Psoas muscle (tissue), 8 donors: ENCODE measurements at regions of chr17 and their contacts with region 1.

Region 1: GRCh38 chr17:77437017-77437416 is 296.2 kb downstream of the SEC14L1 start:
- DNase-seq: peak in 1 of 2 donors; percentile 58
- ATAC-seq: no peak
- H3K4me3 ChIP-seq: no peak overlapping the region
- H3K27ac ChIP-seq: peak overlapping the region; percentile 16
- H3K4me1 ChIP-seq: peaks cover 71% of the 10 kb centered on the region
- H3K27me3 ChIP-seq: no peaks in the 10 kb centered on the region
- CTCF ChIP-seq: no peak

Region 2: DNA sequence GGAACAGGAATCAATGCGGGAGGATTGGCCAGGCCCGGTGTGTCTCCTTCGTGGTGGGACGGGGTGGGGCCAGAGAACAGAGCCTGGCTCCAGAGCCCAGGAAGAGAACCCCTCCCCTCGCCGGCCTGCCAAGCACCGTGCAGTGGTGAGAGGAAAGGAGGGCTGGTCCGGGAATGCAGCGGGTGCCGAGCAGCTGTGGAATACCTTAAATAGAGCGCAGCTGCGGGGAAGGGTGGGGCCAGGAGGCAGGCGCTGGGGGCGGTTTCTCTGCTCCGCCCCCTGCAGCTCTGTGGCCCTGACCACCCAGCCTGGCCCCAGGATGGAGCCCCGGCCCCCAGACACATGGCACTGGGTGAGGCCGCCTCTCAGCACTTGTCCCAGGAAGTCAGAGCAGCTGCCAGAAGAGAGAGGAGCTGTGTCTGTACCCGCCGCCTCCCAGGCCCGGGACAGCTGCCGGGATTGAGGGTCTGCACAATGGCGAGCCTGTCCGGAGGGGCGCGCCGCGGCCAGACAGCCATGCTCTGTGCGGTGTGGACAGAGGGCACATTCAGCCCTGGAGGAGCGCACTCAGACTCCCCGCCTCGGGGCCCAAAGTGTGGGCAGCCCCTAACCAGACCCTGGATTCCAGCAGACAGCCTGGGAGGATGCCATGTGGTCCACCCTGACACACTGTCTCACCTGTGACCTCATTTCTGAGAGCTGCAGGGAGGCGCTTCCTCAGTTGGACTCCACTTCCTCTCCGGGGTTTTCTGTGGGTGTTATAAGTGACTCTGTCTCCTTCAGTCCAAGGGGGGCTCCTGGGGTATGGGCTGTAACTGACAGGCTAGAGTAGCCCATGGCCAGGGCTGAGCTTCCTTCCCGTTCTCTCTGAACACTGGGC is 27.5 kb before region 1 on chr17:
- intact Hi-C with region 1: no loop called
- DNase-seq: peak; percentile 65 to 77
- ATAC-seq: peak; percentile 50 to 72 (median 60)
- H3K4me3 ChIP-seq: peak overlapping the region; percentile 27
- H3K27ac ChIP-seq: peak overlapping the region; percentile 65
- H3K4me1 ChIP-seq: peaks cover 47% of the 10 kb centered on the region
- H3K27me3 ChIP-seq: no peaks in the 10 kb centered on the region
- CTCF ChIP-seq: no peak

Region 3: DNA sequence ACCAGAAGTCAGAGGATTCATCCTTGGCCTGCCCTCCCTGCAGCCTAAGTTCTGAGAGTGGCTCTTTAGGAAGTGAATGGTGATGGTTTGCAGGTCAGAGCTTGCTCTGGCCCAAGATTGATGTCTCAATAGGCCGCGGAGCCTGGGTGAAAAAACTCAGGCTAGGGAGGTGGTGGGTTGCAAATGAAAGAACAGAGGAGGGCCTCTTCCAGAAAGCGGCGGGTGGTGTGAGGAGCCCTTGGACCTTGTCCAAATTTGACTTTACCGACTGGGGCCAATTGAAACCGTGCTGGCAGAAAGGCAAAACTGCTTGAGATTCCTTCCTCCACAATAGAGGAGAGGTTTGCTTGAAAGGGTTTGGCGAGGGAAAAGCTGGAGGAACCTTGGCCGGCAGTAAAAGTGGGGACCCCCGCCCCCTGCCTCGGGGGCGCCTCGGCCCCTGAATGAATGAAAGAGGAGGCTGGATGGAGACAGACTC is 35.0 kb after region 1 on chr17:
- intact Hi-C with region 1: loop called in 1 of 2 experiments (anchors 5 kb)
- DNase-seq: peak in 1 of 2 donors; percentile 51
- ATAC-seq: peak in 2 of 4 donors; percentile 6 to 17
- H3K4me3 ChIP-seq: no peak overlapping the region
- H3K27ac ChIP-seq: peak overlapping the region; percentile 46
- H3K4me1 ChIP-seq: peaks cover 53% of the 10 kb centered on the region
- H3K27me3 ChIP-seq: no peaks in the 10 kb centered on the region
- CTCF ChIP-seq: no peak

Region 4: GRCh38 chr17:77479372-77480198 is 42.6 kb after region 1 on chr17:
- intact Hi-C with region 1: loop called (anchors 5 kb)
- DNase-seq: no peak
- ATAC-seq: no peak
- H3K4me3 ChIP-seq: no peak overlapping the region
- H3K27ac ChIP-seq: no peak overlapping the region
- H3K4me1 ChIP-seq: peaks cover 31% of the 10 kb centered on the region
- H3K27me3 ChIP-seq: no peaks in the 10 kb centered on the region
- CTCF ChIP-seq: no peak

Region 5: GRCh38 chr17:77881545-77881944 is 444.5 kb after region 1 on chr17:
- intact Hi-C with region 1: loop called in 1 of 2 experiments (anchors 5 kb)
- DNase-seq: peak; percentile 86 to 92
- ATAC-seq: peak; percentile 54 to 82 (median 70)
- H3K4me3 ChIP-seq: no peak overlapping the region
- H3K27ac ChIP-seq: no peak overlapping the region
- H3K4me1 ChIP-seq: peaks cover 9% of the 10 kb centered on the region
- H3K27me3 ChIP-seq: peaks cover 0 to 7% (median 0%) of the 10 kb centered on the region in 3 donors
- CTCF ChIP-seq: no peak